ENCODE measurements at regions of chr10 and their contacts with region 1.

Region 1: GRCh38 chr10:3197348-3198003 is 24.9 kb upstream of the PITRM1 start:
- DNase-seq: peak; percentile 24
- ATAC-seq: peak; percentile 90
- H3K4me3 ChIP-seq: no peak overlapping the region
- H3K27ac ChIP-seq: no peak overlapping the region
- H3K4me1 ChIP-seq: no peaks in the 10 kb centered on the region
- H3K27me3 ChIP-seq: peaks cover 1 to 12% of the 10 kb centered on the region in 2 experiments; a peak in 3 of 4 replicates
- CTCF ChIP-seq: peak; percentile 68 to 77 (median 73)
- EP300 ChIP-seq: peak in 1 of 2 experiments; percentile 37; a peak in 2 of 4 replicates
- POLR2A ChIP-seq: no peak
- RAD21 ChIP-seq: peak; percentile 66

Region 2: GRCh38 chr10:3036155-3037021 is 161.1 kb before region 1 on chr10:
- CTCF ChIA-PET with region 1: no interaction called
- POLR2A ChIA-PET with region 1: no interaction called
- RAD21 ChIA-PET with region 1: no interaction called
- SMC1A ChIA-PET with region 1: no interaction called
- in situ Hi-C with region 1: no loop called
- intact Hi-C with region 1: no loop called
- DNase-seq: peak; percentile 52
- ATAC-seq: peak; percentile 97
- H3K4me3 ChIP-seq: no peak overlapping the region
- H3K27ac ChIP-seq: no peak overlapping the region
- H3K4me1 ChIP-seq: peaks cover 3% of the 10 kb centered on the region; the same call in 1 of the 2 replicates
- H3K27me3 ChIP-seq: no peaks in the 10 kb centered on the region
- CTCF ChIP-seq: no peak
- EP300 ChIP-seq: peak in 1 of 2 experiments; percentile 59; a peak in 2 of 4 replicates
- POLR2A ChIP-seq: no peak
- RAD21 ChIP-seq: no peak

Region 3: GRCh38 chr10:3180355-3181025 is 17.0 kb before region 1 on chr10:
- CTCF ChIA-PET with region 1: interaction called, 12 read pairs
- POLR2A ChIA-PET with region 1: no interaction called
- RAD21 ChIA-PET with region 1: interaction called, 5 read pairs
- SMC1A ChIA-PET with region 1: interaction called, 4 read pairs
- in situ Hi-C with region 1: no loop called
- intact Hi-C with region 1: no loop called
- DNase-seq: no peak
- ATAC-seq: no peak
- H3K4me3 ChIP-seq: no peak overlapping the region
- H3K27ac ChIP-seq: no peak overlapping the region
- H3K4me1 ChIP-seq: peaks cover 6% of the 10 kb centered on the region; the same call in 1 of the 2 replicates
- H3K27me3 ChIP-seq: peaks cover 0 to 5% of the 10 kb centered on the region in 2 experiments; a peak in 3 of 4 replicates
- CTCF ChIP-seq: no peak
- EP300 ChIP-seq: no peak
- POLR2A ChIP-seq: no peak
- RAD21 ChIP-seq: no peak

Region 4: DNA sequence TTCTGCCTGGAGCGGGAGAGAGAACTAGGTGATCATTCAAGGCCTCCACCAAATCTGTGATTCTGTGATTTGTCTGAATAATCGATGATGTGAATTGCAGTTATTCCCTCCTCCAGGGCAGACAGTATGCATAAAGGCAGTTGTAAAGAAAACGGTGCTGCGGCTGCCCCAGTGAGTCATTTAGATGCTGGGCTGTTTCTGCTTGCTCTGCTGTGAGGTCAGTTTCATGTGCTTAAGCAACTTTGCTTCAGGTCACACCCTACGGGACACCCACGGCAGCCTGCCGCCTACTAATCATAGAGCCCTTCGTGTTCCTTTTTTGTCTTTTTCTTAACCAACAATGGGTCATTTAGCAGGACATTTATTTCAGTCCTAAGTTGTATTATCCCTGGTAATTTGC is 133.2 kb after region 1 on chr10:
- CTCF ChIA-PET with region 1: no interaction called
- POLR2A ChIA-PET with region 1: no interaction called
- RAD21 ChIA-PET with region 1: no interaction called
- SMC1A ChIA-PET with region 1: no interaction called
- in situ Hi-C with region 1: no loop called
- intact Hi-C with region 1: no loop called
- DNase-seq: no peak
- ATAC-seq: no peak
- H3K4me3 ChIP-seq: no peak overlapping the region
- H3K27ac ChIP-seq: no peak overlapping the region
- H3K4me1 ChIP-seq: no peaks in the 10 kb centered on the region
- H3K27me3 ChIP-seq: no peaks in the 10 kb centered on the region; a peak in 2 of 4 replicates
- CTCF ChIP-seq: no peak
- EP300 ChIP-seq: no peak
- POLR2A ChIP-seq: no peak
- RAD21 ChIP-seq: no peak

Region 5: GRCh38 chr10:4767033-4767814 is 1569.7 kb after region 1 on chr10:
- CTCF ChIA-PET with region 1: interaction called, 6 read pairs
- POLR2A ChIA-PET with region 1: no interaction called
- RAD21 ChIA-PET with region 1: interaction called, 3 read pairs
- SMC1A ChIA-PET with region 1: interaction called, 3 read pairs
- in situ Hi-C with region 1: no loop called
- intact Hi-C with region 1: loop called (anchors 2 kb)
- DNase-seq: no peak
- ATAC-seq: no peak
- H3K4me3 ChIP-seq: no peak overlapping the region
- H3K27ac ChIP-seq: no peak overlapping the region
- H3K4me1 ChIP-seq: no peaks in the 10 kb centered on the region
- H3K27me3 ChIP-seq: no peaks in the 10 kb centered on the region
- CTCF ChIP-seq: peak; percentile 20 to 51 (median 23); a peak in 4 of 6 replicates
- EP300 ChIP-seq: no peak
- POLR2A ChIP-seq: no peak
- RAD21 ChIP-seq: peak; percentile 55